PC-9 (cell line): ENCODE measurements at regions of chrX and their contacts with region 1.

Region 1: DNA sequence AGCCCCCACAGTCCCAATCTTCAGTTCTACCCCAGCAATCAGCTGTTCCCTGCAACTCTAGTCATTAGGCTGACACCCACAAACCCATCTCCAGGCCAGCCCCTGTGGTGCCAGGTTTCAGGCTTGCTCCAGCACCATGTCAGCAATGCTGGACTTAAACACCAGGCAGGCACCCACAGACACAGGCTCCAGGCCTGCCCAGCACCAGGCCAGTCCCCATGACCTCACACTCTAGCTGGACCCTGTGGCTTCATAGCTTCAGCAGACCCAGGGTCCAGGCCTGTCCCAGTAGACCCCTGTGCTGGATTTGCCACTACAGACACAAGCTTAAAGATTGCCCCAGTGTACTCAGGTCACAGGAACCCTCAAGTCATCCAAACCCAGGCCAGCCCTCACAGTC is 300.3 kb downstream of the CHIC1 start:
- DNase-seq: no peak
- H3K4me3 ChIP-seq: no peak overlapping the region
- H3K27ac ChIP-seq: no peak overlapping the region
- H3K4me1 ChIP-seq: no peaks in the 10 kb centered on the region; the same call in 1 of the 2 replicates
- H3K27me3 ChIP-seq: no peaks in the 10 kb centered on the region
- CTCF ChIP-seq: no peak

Region 2: DNA sequence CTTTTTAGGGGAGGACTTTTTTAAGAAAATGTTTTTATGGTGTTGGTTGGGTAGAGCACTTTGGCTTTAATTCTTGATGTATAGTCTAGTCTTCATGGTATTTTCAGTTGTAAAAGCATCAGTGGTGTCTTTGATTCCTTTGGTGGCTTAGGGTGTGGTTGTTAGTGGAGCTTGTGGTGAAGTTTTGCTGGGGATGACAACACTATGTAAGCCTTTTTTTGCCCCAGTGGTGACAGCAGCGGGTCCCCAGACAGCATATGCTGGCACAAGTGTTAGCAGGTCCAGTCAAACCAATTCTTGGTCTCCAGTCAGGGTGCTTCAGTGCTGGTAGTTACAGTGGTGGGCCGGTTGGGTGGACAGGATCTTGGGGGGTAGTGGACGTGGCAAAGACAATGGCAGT is 248.2 kb before region 1 on chrX:
- CTCF ChIA-PET with region 1: no interaction called
- POLR2A ChIA-PET with region 1: no interaction called
- intact Hi-C with region 1: no loop called
- DNase-seq: no peak
- H3K4me3 ChIP-seq: no peak overlapping the region
- H3K27ac ChIP-seq: no peak overlapping the region
- H3K4me1 ChIP-seq: no peaks in the 10 kb centered on the region
- H3K27me3 ChIP-seq: no peaks in the 10 kb centered on the region
- CTCF ChIP-seq: no peak

Region 3: DNA sequence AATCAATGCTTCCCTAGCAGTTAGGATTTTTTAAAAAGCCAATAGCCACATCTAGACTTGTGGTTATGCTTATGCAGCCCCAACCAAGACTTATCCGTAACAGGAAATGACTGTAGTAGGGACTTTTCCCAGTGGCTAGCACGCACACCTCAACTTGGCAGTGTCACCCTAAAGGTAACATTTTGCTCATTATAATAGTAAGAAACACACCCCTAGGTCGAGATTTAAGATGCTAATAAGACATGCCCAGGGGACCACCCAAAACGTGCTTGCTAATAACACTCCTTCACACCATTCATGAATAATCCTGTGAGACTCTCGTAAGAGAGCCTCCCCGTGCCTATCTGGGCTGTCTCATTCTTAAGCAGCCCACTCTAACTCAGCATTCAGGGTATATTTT is 105.0 kb before region 1 on chrX:
- CTCF ChIA-PET with region 1: no interaction called
- POLR2A ChIA-PET with region 1: no interaction called
- intact Hi-C with region 1: no loop called
- DNase-seq: no peak
- H3K4me3 ChIP-seq: no peak overlapping the region
- H3K27ac ChIP-seq: no peak overlapping the region
- H3K4me1 ChIP-seq: no peaks in the 10 kb centered on the region
- H3K27me3 ChIP-seq: no peaks in the 10 kb centered on the region
- CTCF ChIP-seq: no peak

Region 4: GRCh38 chrX:73943693-73944562 is 80.7 kb after region 1 on chrX:
- CTCF ChIA-PET with region 1: no interaction called
- POLR2A ChIA-PET with region 1: no interaction called
- intact Hi-C with region 1: loop called (anchors 10 kb)
- DNase-seq: peak; percentile 75 to 81
- H3K4me3 ChIP-seq: peak overlapping the region; percentile 99
- H3K27ac ChIP-seq: peak overlapping the region; percentile 69
- H3K4me1 ChIP-seq: peaks cover 10% of the 10 kb centered on the region
- H3K27me3 ChIP-seq: no peaks in the 10 kb centered on the region
- CTCF ChIP-seq: no peak

Region 5: GRCh38 chrX:74090049-74090448 is 226.8 kb after region 1 on chrX:
- CTCF ChIA-PET with region 1: no interaction called
- POLR2A ChIA-PET with region 1: no interaction called
- intact Hi-C with region 1: no loop called
- DNase-seq: no peak
- H3K4me3 ChIP-seq: no peak overlapping the region
- H3K27ac ChIP-seq: no peak overlapping the region
- H3K4me1 ChIP-seq: no peaks in the 10 kb centered on the region
- H3K27me3 ChIP-seq: no peaks in the 10 kb centered on the region
- CTCF ChIP-seq: no peak